Right ventricle myocardium inferior (tissue), 1 donor: ENCODE measurements at regions of chr12 and their contacts with region 1.

Region 1: GRCh38 chr12:94133964-94134795 is 14.2 kb upstream of the PLXNC1 start:
- DNase-seq: no peak
- ATAC-seq: peak; percentile 68

Region 2: DNA sequence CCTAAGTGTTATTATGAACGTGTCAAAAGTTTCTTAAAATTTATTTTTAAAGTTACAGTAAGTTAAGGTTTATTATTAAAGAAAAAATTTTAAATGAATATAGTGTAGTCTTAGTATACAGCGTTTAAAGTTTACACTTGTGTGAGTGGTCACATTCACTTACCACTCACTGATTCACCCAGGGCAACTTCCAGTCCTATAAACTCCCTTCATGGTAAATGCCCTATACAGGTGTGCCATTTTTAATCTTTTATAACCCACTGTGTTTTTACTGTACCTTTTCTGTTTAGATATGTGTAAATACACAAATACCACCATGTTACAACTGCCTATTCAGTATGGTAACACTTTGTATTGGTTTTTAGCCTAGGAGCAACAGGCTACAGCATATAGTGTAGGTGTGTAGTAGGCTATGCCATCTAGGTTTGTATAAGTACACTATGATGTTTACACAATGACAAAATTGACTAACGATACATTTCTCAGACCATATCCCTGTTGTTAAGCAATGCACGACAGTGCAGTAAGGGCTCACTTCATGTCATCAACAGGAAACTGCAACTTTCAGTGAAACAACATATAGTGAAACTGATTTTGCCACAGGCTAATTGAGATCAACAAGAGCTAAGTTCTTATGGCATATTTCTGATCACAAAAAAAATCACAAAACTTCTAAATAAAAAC is 628.2 kb after region 1 on chr12:
- intact Hi-C with region 1: loop called (anchors 10 kb)
- DNase-seq: no peak
- ATAC-seq: no peak